Panc1 (cell line): ENCODE measurements at regions of chr15 and their contacts with region 1.

Region 1: GRCh38 chr15:45048794-45049631 is 26.0 kb downstream of the SORD start:
- DNase-seq: no peak
- ATAC-seq: no peak
- H3K4me3 ChIP-seq: no peak overlapping the region
- H3K27ac ChIP-seq: no peak overlapping the region
- H3K4me1 ChIP-seq: no peaks in the 10 kb centered on the region
- H3K27me3 ChIP-seq: no peaks in the 10 kb centered on the region
- CTCF ChIP-seq: no peak

Region 2: DNA sequence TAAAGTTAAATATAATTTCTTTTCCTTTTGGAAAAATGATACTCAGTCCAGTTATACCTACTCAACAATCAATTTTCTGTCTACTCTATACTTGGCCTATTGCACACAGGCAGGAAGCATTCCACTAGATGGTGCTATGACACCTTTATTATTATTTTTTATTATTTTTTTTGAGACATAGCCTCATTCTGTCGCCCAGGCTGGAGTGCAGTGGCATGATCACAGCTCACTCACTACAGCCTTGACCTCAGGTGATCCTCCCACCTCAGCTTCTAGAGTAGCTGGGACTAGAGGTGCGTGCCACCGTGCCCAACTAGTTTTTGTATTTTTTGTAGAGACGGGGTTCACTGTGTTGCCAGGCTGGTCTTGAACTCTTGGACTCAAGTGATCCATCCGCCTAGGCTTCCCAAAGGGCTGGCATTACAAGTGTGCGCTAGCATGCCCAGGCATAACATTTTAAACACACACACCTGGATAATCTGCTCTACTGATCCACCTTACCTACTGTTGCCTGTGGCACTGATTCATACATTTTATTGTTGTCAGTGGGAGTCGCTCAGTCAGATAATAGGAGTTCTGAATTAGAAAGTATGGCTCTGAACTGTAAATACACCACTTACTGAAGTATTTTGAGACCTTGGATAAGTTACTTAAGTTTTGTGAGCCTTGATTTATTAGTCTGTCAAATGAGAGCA is 455.8 kb before region 1 on chr15:
- CTCF ChIA-PET with region 1: no interaction called
- POLR2A ChIA-PET with region 1: interaction called, 18 read pairs
- in situ Hi-C with region 1: no loop called
- intact Hi-C with region 1: no loop called
- DNase-seq: no peak
- ATAC-seq: peak; percentile 83
- H3K4me3 ChIP-seq: no peak overlapping the region
- H3K27ac ChIP-seq: no peak overlapping the region
- H3K4me1 ChIP-seq: no peaks in the 10 kb centered on the region
- H3K27me3 ChIP-seq: no peaks in the 10 kb centered on the region
- CTCF ChIP-seq: peak; percentile 73